A673 (cell line): ENCODE measurements at regions of chr6 and their contacts with region 1.

Region 1: DNA sequence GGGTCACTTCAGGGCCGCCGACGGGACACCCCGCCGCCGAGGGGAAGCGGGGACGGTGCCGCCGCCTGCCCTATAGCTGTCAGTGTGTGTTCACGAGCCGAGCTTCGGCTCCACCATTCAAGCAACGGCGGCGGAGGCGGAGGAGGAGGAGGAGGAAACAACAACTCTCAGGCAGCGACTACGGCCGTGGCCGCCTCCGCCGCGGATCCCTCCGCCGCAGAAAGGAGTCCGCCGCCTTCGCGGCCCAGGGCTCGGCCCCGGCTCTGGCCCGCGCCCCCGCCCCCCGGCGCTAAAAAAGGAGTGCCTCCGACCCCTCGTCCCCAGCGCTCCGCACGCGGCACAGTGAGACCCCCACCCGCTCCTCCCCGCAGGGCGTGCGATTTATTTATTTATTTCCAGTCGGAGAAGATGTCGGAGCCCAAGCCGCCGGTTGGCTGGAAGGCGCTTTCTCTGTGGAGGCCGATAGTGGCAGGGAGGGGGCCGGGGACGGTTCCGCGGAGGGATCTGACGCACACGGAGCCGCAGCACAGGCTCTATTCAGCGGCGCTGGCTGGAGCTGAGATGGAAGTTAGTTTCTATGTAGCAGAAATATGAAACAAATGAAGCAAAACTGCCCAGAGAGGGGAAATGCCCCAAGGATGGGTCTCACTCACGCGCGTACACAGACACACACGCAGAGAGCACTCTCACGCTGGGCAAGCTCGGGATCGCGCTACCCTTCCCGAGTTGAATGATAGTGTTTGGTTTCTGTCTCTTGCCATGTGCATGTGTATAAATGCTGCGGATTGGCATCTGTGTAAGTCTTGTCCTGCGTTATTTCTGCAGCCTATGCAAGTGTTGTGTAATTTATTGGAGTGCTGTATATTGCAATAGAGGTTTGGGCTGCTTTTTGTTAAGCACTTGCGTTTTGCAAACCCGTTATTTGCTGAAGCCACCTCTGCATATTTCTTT is at the start of gene PHIP:
- DNase-seq: peak; percentile 96
- H3K4me3 ChIP-seq: peak within 1 kb of the TSS; percentile 81
- H3K27ac ChIP-seq: peak within 1 kb of the TSS; percentile 98
- H3K4me1 ChIP-seq: peaks cover 30% of the 10 kb centered on the region
- H3K27me3 ChIP-seq: no peaks in the 10 kb centered on the region
- CTCF ChIP-seq: no peak
- total RNA-seq, gene PHIP: 42.5 and 45.1 TPM in 2 replicates

Region 2: DNA sequence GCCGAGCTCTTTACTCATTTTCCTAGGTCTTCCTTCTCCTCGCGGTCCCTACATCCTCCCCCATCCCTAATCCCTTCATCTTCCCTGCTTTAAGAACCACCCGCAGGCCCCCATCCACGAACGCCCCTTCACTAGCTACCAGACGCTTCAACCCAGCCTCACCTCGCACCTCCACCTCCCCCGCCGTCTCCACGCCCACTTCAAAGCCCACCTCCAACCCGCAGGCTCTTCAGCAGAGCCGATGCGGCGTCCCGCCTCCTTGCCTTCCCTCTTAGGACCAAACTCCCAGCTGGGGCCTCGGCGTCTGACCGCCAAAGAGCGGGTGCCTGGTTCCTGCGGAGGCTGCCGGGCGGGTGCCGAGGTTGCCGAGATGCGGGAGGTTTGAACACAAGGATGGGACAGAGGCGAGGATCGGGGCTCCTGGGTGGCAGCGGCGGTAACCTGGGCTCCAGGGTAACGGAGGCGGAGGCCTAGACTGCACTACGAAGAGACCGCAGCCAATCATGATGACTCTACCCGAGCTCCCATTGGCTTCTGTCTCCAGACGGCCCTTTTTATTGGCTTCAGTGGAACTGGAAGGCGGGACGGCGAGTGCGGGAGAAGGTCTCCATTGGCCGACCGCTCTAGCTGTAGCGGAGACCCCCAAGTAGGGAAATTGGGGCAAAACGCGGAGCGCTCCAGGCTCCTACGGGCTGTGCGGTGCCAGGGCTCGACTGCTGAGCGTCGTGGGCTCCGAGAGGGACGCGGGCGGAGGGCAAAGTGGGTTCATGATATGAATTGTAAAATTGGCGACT is 458.8 kb after region 1 on chr6 and contains the start of gene LCA5:
- CTCF ChIA-PET with region 1: no interaction called
- POLR2A ChIA-PET with region 1: no interaction called
- intact Hi-C with region 1: loop called (anchors 1 kb)
- DNase-seq: peak; percentile 99
- H3K4me3 ChIP-seq: peak within 1 kb of the TSS; percentile 77
- H3K27ac ChIP-seq: peak within 1 kb of the TSS; percentile 50
- H3K4me1 ChIP-seq: peaks cover 21% of the 10 kb centered on the region
- H3K27me3 ChIP-seq: no peaks in the 10 kb centered on the region
- CTCF ChIP-seq: no peak
- total RNA-seq, gene LCA5: 3.5 and 4.0 TPM in 2 replicates